CD8-positive, alpha-beta T cell (primary cell): ENCODE measurements at regions of chr17 and their contacts with region 1.

Region 1: DNA sequence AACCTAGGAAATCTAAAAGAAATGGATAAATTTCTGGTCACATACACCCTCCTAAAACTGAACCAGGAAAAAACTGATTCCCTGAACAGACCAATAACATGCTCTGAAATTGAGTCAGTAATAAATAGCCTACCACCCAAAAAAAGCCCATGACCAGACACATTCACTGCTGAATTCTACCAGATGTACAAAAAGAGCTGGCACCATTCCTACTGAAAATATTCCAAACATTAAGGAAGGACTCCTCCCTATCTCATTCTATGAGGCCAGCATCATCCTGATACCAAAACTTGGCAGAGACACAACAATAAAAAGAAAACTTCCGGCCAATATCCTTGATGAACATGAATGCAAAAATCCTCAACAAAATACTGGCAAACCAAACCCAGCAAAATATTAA is 52.9 kb downstream of the TTC19 start:
- DNase-seq: no peak
- ATAC-seq: no peak
- H3K4me3 ChIP-seq: no peak overlapping the region
- H3K4me3 Mint-ChIP-seq: no peak overlapping the region
- H3K27ac ChIP-seq: no peak overlapping the region
- H3K27ac Mint-ChIP-seq: peak overlapping the region; percentile 20
- H3K4me1 ChIP-seq: no peaks in the 10 kb centered on the region
- H3K4me1 Mint-ChIP-seq: peaks cover 23% of the 10 kb centered on the region
- H3K27me3 ChIP-seq: no peaks in the 10 kb centered on the region
- H3K27me3 Mint-ChIP-seq: no peaks in the 10 kb centered on the region
- CTCF ChIP-seq: no peak

Region 2: DNA sequence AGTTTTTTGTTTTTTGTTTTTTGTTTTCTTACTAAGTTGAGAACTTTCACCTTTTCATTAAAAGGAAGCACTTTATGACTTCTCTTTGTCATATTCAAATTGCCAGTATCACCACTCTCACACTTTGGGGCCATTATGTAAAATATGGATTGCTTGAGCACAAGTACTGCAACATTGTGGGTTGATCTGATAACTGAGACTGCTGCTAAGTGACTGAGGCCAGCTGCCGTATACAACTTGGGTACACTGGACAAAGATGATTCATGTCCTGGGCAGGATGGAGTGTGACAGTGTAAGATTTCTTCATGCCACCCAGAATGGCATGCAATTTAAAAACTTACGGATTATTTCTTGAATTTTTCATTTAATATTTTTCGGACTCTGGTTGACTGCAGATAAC is 45.0 kb before region 1 on chr17:
- CTCF ChIA-PET with region 1: no interaction called
- POLR2A ChIA-PET with region 1: no interaction called
- intact Hi-C with region 1: no loop called
- DNase-seq: no peak
- ATAC-seq: no peak
- H3K4me3 ChIP-seq: no peak overlapping the region
- H3K4me3 Mint-ChIP-seq: no peak overlapping the region
- H3K27ac ChIP-seq: no peak overlapping the region
- H3K27ac Mint-ChIP-seq: no peak overlapping the region
- H3K4me1 ChIP-seq: no peaks in the 10 kb centered on the region
- H3K4me1 Mint-ChIP-seq: peaks cover 19% of the 10 kb centered on the region
- H3K27me3 ChIP-seq: no peaks in the 10 kb centered on the region
- H3K27me3 Mint-ChIP-seq: no peaks in the 10 kb centered on the region
- CTCF ChIP-seq: no peak

Region 3: GRCh38 chr17:16100737-16101400 is 48.4 kb after region 1 on chr17:
- CTCF ChIA-PET with region 1: no interaction called
- POLR2A ChIA-PET with region 1: no interaction called
- intact Hi-C with region 1: loop called in 1 of 2 experiments (anchors 2 kb)
- DNase-seq: peak in 1 of 9 experiments; percentile 3
- ATAC-seq: no peak
- H3K4me3 ChIP-seq: no peak overlapping the region
- H3K4me3 Mint-ChIP-seq: no peak overlapping the region
- H3K27ac ChIP-seq: no peak overlapping the region
- H3K27ac Mint-ChIP-seq: peak overlapping the region; percentile 27
- H3K4me1 ChIP-seq: no peaks in the 10 kb centered on the region
- H3K4me1 Mint-ChIP-seq: peaks cover 7% of the 10 kb centered on the region
- H3K27me3 ChIP-seq: no peaks in the 10 kb centered on the region
- H3K27me3 Mint-ChIP-seq: no peaks in the 10 kb centered on the region
- CTCF ChIP-seq: no peak

Region 4: GRCh38 chr17:16589097-16589969 is 536.8 kb after region 1 on chr17:
- CTCF ChIA-PET with region 1: no interaction called
- POLR2A ChIA-PET with region 1: no interaction called
- intact Hi-C with region 1: no loop called
- DNase-seq: peak; percentile 81 to 96 (median 92)
- ATAC-seq: peak; percentile 94
- H3K4me3 ChIP-seq: peak overlapping the region; percentile 62 to 65
- H3K4me3 Mint-ChIP-seq: peak overlapping the region; percentile 79
- H3K27ac ChIP-seq: no peak overlapping the region
- H3K27ac Mint-ChIP-seq: no peak overlapping the region
- H3K4me1 ChIP-seq: peaks cover 12% of the 10 kb centered on the region
- H3K4me1 Mint-ChIP-seq: peaks cover 16% of the 10 kb centered on the region
- H3K27me3 ChIP-seq: no peaks in the 10 kb centered on the region
- H3K27me3 Mint-ChIP-seq: peaks cover 33% of the 10 kb centered on the region
- CTCF ChIP-seq: peak; percentile 95